Vagina (tissue), 2 donors: ENCODE measurements at regions of chr10 and their contacts with region 1.

Region 1: DNA sequence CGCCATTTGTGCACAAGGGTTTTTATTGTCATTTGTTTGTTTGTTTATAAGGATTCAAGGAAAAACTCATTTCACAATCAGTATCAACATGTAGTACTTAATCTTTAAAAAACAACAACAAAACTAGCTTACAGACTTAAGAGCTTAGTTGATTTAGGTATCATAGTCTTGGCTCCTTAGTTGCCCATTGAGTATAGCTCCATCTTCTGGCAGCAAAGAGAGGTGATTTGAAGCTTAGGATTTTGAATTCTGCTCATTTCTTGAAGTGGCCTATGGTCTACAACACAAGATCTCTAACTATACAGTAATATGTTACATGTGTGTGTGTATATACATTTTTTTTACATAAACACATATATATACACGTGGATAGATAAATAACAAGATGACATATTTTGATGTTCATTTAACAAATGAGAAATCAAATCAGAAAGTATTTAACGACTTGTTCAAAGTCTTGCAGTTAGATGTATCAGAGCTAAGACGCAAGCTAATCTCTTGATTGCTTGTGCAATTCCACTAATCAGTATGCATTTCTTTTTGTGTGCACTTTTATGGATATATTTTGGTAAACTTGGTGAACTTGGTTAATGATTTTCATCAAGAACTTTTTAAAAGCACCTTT is 307.3 kb downstream of the CAMK1D start:
- DNase-seq: no peak
- H3K4me3 ChIP-seq: no peak overlapping the region
- H3K27ac ChIP-seq: no peak overlapping the region
- H3K4me1 ChIP-seq: no peaks in the 10 kb centered on the region
- H3K27me3 ChIP-seq: no peaks in the 10 kb centered on the region
- CTCF ChIP-seq: peak in 2 of 3 experiments; percentile 48 to 75
- POLR2A ChIP-seq: no peak

Region 2: GRCh38 chr10:12264204-12264940 is 392.3 kb before region 1 on chr10:
- intact Hi-C with region 1: loop called (anchors 5 kb)
- DNase-seq: no peak
- H3K4me3 ChIP-seq: peak overlapping the region; percentile 30 to 50
- H3K27ac ChIP-seq: peak overlapping the region; percentile 21
- H3K4me1 ChIP-seq: no peaks in the 10 kb centered on the region
- H3K27me3 ChIP-seq: no peaks in the 10 kb centered on the region
- CTCF ChIP-seq: peak; percentile 33 to 95 (median 88)
- POLR2A ChIP-seq: no peak

Region 3: GRCh38 chr10:12448729-12449391 is 207.8 kb before region 1 on chr10:
- intact Hi-C with region 1: no loop called
- DNase-seq: no peak
- H3K4me3 ChIP-seq: no peak overlapping the region
- H3K27ac ChIP-seq: peak overlapping the region; percentile 25
- H3K4me1 ChIP-seq: peaks cover 27% of the 10 kb centered on the region
- H3K27me3 ChIP-seq: no peaks in the 10 kb centered on the region
- CTCF ChIP-seq: no peak
- POLR2A ChIP-seq: peak in 1 of 2 donors; percentile 50